ENCODE measurements at regions of chr17 and their contacts with region 1.

Region 1: GRCh38 chr17:75894049-75894711 is 2.6 kb downstream of the TRIM65 start:
- DNase-seq: no peak
- H3K4me3 ChIP-seq: no peak overlapping the region
- H3K27ac ChIP-seq: peak overlapping the region; percentile 90 to 98
- H3K4me1 ChIP-seq: peaks cover 0 to 32% (median 21%) of the 10 kb centered on the region in 4 donors
- H3K27me3 ChIP-seq: no peaks in the 10 kb centered on the region
- CTCF ChIP-seq: no peak

Region 2: GRCh38 chr17:75764711-75765421 is 129.3 kb before region 1 on chr17 and contains the start of gene GALK1:
- intact Hi-C with region 1: loop called (anchors 5 kb)
- DNase-seq: peak; percentile 68 to 90
- H3K4me3 ChIP-seq: peak within 1 kb of the TSS; percentile 58 to 73
- H3K27ac ChIP-seq: peak within 1 kb of the TSS; percentile 76 to 90
- H3K4me1 ChIP-seq: peaks cover 7 to 26% (median 13%) of the 10 kb centered on the region in 4 donors
- H3K27me3 ChIP-seq: no peaks in the 10 kb centered on the region
- CTCF ChIP-seq: peak in 1 of 2 experiments; percentile 44

Region 3: DNA sequence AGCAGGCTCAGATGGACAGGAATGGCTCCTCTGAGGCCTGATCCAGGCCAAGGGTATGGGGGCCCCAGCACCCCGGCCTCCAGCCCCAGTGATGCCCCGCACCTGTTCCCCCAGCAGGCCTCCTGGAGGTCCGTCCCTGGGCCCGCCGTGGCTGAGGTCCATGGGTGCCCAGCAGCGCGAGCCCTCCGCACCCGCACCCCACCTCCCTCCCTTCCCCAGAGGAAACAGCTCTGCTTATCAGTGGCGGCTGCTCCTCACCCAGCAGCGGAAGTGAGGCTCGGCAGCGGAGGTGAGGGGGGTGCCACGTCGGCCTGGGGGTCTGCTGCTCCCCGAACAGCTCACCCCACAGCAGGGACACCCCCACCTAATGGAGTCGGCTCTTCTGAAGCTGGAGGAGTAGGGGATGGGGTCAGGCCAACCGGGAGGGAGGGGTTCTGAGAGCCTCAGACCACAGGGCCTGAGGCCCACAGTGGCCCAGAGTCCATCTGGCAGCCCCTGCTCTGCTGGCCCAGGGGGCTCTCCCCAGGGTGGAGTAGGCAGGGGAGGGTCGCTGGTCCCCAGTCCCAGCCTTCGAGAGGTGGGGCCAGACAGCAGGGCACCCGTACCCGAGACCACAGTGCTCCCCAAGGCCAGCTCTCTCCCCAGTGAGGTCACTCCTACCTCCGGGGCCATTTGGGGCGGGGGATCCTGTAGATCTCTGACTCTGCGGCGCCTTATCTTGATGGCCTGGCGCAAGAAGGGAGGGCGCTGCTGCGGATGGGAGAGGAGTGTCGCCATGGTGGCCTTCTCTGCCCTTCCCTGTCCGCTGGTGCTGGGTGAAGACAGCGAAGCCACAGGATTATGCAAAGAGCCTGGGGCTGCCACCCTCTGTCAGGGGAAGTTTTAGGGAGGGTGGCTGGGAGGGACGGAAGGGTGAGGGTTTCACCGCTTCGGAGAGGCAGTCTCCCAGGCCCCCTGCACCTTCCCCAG is 50.3 kb before region 1 on chr17 and contains the start of gene UNC13D:
- intact Hi-C with region 1: loop called (anchors 5 kb)
- DNase-seq: no peak
- H3K4me3 ChIP-seq: peak within 1 kb of the TSS in 1 of 2 donors; percentile 5
- H3K27ac ChIP-seq: peak within 1 kb of the TSS; percentile 86
- H3K4me1 ChIP-seq: peaks cover 0 to 50% (median 26%) of the 10 kb centered on the region in 4 donors
- H3K27me3 ChIP-seq: no peaks in the 10 kb centered on the region
- CTCF ChIP-seq: no peak

Region 4: DNA sequence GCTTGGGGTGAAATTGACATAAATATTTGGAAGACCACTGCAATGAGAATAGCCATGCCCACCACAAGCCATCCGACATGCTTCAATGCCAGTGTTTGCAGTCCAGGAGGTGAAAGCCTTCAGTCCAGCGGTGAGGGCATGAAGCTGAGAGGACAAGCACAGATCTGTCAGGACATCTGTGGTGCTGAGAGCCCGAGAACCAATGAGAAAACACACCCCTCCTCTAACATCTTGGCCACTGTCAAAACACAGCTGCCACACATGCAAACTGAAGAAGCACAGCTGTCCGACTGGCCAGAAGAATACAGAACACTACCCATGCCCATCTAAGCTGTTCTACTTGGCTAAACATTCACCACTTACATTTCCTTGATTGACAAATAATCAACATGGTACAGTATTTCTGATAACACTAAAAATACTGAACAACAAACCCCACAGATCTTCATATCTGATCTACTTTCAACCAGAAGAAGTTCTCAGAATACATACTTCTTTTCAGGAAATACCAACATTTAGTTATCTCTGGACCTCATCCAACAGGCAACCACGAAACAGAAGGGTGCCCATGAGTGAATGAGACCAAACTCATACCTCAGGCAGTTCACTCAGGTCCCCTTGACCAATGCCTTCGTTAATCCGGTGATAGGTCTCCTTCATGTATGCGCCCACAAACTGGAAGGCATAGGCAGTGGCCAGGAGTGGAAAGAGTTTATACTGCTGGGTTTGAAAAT is 56.8 kb after region 1 on chr17:
- intact Hi-C with region 1: no loop called
- DNase-seq: no peak
- H3K4me3 ChIP-seq: no peak overlapping the region
- H3K27ac ChIP-seq: no peak overlapping the region
- H3K4me1 ChIP-seq: no peaks in the 10 kb centered on the region
- H3K27me3 ChIP-seq: no peaks in the 10 kb centered on the region
- CTCF ChIP-seq: no peak